ENCODE measurements at regions of chr21 and their contacts with region 1.

Region 1: DNA sequence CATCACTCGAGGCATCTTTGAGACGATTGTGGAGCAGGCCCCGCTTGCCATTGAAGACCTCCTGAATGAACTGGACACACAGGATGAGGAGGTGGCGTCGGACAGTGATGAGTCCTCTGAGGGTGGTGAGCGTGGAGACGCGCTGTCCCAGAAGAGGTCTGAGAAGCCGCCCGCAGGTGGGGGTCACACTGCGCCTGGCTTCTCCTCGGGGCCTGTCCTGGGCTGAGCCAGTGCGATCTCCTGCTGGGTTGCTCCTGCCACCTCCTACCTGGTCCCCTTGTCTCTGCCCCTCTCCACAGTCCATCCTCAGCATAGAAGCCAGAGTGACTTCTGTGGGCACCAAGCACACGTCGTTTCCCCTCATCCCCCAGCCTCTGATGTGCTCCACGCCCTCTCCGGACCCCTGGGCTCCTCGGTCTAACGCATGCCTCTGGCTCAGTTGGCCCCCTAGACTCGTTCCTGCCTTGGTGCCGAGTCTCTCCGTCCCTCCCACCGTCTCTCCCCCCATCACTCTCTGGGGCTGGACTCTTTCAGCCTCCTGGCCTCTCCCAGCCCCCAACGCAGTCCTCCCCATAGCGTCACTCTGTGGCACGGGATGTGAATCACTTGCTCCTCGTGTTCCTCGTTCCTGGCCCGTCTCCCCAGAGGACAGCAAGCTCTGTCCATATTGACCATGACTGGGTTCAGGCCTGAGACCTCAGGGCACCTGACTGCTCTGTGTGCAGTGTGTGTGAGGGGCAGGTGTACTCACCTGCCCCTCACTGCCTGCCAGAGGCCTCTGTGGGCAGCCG is 8.7 kb downstream of the RRP1 start:
- DNase-seq: no peak
- H3K4me3 ChIP-seq: no peak overlapping the region
- H3K27ac ChIP-seq: no peak overlapping the region
- H3K4me1 ChIP-seq: no peaks in the 10 kb centered on the region
- H3K27me3 ChIP-seq: no peaks in the 10 kb centered on the region
- CTCF ChIP-seq: no peak
- EP300 ChIP-seq: no peak
- POLR2A ChIP-seq: no peak
- RAD21 ChIP-seq: no peak

Region 2: DNA sequence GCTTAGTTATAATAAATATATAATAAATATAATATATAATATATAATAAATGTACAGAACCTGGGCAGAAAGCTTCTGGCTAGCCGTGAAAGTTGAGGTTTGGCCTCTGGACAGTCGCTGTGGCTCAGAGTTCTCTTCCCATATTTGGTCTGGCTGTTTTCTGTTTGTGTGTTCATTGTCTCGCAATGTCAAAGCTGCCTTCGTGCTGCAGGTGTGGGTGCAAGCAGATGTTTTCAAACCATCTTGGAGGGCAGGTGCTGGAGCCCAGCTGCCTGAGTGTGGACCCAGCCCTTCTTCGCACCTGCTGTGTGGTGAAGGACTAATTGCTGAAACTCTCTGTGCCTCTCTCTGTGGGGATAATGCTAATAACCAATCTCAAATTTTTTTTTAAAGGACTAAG is 18.5 kb before region 1 on chr21:
- CTCF ChIA-PET with region 1: no interaction called
- POLR2A ChIA-PET with region 1: no interaction called
- DNase-seq: no peak
- H3K4me3 ChIP-seq: no peak overlapping the region
- H3K27ac ChIP-seq: no peak overlapping the region
- H3K4me1 ChIP-seq: peaks cover 0 to 9% (median 4%) of the 10 kb centered on the region in 4 experiments; a peak in 5 of 7 replicates
- H3K27me3 ChIP-seq: no peaks in the 10 kb centered on the region
- CTCF ChIP-seq: no peak
- EP300 ChIP-seq: no peak
- POLR2A ChIP-seq: no peak
- RAD21 ChIP-seq: no peak

Region 3: GRCh38 chr21:43810505-43811261 is 12.6 kb after region 1 on chr21:
- CTCF ChIA-PET with region 1: interaction called, 4 read pairs
- POLR2A ChIA-PET with region 1: interaction called, 80 read pairs
- DNase-seq: peak; percentile 41 to 100
- H3K4me3 ChIP-seq: no peak overlapping the region; a peak in 1 of 8 replicates
- H3K27ac ChIP-seq: no peak overlapping the region
- H3K4me1 ChIP-seq: peaks cover 0 to 15% (median 12%) of the 10 kb centered on the region in 4 experiments; a peak in 6 of 7 replicates
- H3K27me3 ChIP-seq: no peaks in the 10 kb centered on the region
- CTCF ChIP-seq: peak in 2 of 3 experiments; percentile 92 to 97; a peak in 3 of 4 replicates
- EP300 ChIP-seq: no peak
- POLR2A ChIP-seq: no peak
- RAD21 ChIP-seq: peak; percentile 97 to 99